Naive thymus-derived CD4-positive, alpha-beta T cell (primary cell): ENCODE measurements at regions of chr5 and their contacts with region 1.

Region 1: GRCh38 chr5:55982957-55983381 is 11.8 kb downstream of the IL6ST start:
- DNase-seq: peak in 7 of 9 donors; percentile 42 to 63 (median 53)
- ATAC-seq: peak; percentile 46
- H3K4me3 ChIP-seq: peak overlapping the region; percentile 44
- H3K4me3 Mint-ChIP-seq: peak overlapping the region; percentile 48 to 96 (median 84)
- H3K27ac ChIP-seq: peak overlapping the region; percentile 67
- H3K27ac Mint-ChIP-seq: peak overlapping the region; percentile 24 to 98 (median 85)
- H3K4me1 ChIP-seq: peaks cover 0 to 63% of the 10 kb centered on the region in 2 donors
- H3K4me1 Mint-ChIP-seq: peaks cover 37 to 94% (median 84%) of the 10 kb centered on the region in 7 donors
- H3K27me3 ChIP-seq: no peaks in the 10 kb centered on the region
- H3K27me3 Mint-ChIP-seq: no peaks in the 10 kb centered on the region

Region 2: GRCh38 chr5:55633574-55634208 is 349.3 kb before region 1 on chr5:
- CTCF ChIA-PET with region 1: no interaction called
- POLR2A ChIA-PET with region 1: no interaction called
- intact Hi-C with region 1: no loop called
- DNase-seq: peak in 1 of 9 donors; percentile 3
- ATAC-seq: no peak
- H3K4me3 ChIP-seq: no peak overlapping the region
- H3K4me3 Mint-ChIP-seq: peak overlapping the region in 8 of 10 donors; percentile 32 to 68 (median 55)
- H3K27ac ChIP-seq: no peak overlapping the region
- H3K27ac Mint-ChIP-seq: peak overlapping the region in 8 of 9 donors; percentile 16 to 81 (median 43)
- H3K4me1 ChIP-seq: no peaks in the 10 kb centered on the region
- H3K4me1 Mint-ChIP-seq: peaks cover 0 to 18% (median 12%) of the 10 kb centered on the region in 7 donors
- H3K27me3 ChIP-seq: no peaks in the 10 kb centered on the region
- H3K27me3 Mint-ChIP-seq: no peaks in the 10 kb centered on the region

Region 3: DNA sequence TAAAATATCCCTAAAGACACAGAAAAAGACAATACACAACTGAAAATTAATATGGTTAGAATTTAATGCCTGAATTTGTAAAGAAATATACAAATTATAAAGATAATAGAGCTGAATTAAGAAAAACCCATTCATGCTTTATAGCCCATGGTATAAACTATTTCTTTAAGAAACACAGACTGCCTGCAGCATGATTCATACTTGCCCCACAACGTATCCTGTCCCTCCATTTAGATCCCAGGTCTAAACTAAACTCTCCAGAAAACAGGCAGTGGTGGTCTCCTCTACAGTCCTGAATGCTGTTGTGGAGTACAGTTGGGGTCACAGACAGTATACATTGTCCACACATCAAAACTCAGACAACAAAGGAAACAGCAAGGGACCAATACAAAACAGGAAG is 13.0 kb before region 1 on chr5:
- CTCF ChIA-PET with region 1: interaction called, 3 read pairs
- POLR2A ChIA-PET with region 1: interaction called, 5 read pairs
- intact Hi-C with region 1: loop called in 1 of 2 experiments (anchors 1 kb)
- DNase-seq: no peak
- ATAC-seq: peak; percentile 23
- H3K4me3 ChIP-seq: no peak overlapping the region
- H3K4me3 Mint-ChIP-seq: peak overlapping the region; percentile 25 to 81 (median 59)
- H3K27ac ChIP-seq: peak overlapping the region; percentile 2
- H3K27ac Mint-ChIP-seq: peak overlapping the region; percentile 29 to 94 (median 79)
- H3K4me1 ChIP-seq: peaks cover 0 to 41% of the 10 kb centered on the region in 2 donors
- H3K4me1 Mint-ChIP-seq: peaks cover 34 to 90% (median 68%) of the 10 kb centered on the region in 7 donors
- H3K27me3 ChIP-seq: no peaks in the 10 kb centered on the region
- H3K27me3 Mint-ChIP-seq: no peaks in the 10 kb centered on the region

Region 4: GRCh38 chr5:56056875-56057274 is 73.9 kb after region 1 on chr5:
- CTCF ChIA-PET with region 1: interaction called, 9 read pairs
- POLR2A ChIA-PET with region 1: interaction called, 97 read pairs
- intact Hi-C with region 1: loop called in 1 of 2 experiments (anchors 1 kb)
- DNase-seq: no peak
- ATAC-seq: no peak
- H3K4me3 ChIP-seq: peak overlapping the region; percentile 21
- H3K4me3 Mint-ChIP-seq: peak overlapping the region in 8 of 10 donors; percentile 55 to 83 (median 68)
- H3K27ac ChIP-seq: peak overlapping the region; percentile 60
- H3K27ac Mint-ChIP-seq: peak overlapping the region; percentile 44 to 99 (median 90)
- H3K4me1 ChIP-seq: peaks cover 8 to 96% of the 10 kb centered on the region in 2 donors
- H3K4me1 Mint-ChIP-seq: peaks cover 52 to 94% (median 76%) of the 10 kb centered on the region in 7 donors
- H3K27me3 ChIP-seq: no peaks in the 10 kb centered on the region
- H3K27me3 Mint-ChIP-seq: peaks cover 0 to 6% (median 0%) of the 10 kb centered on the region in 5 donors

Region 5: GRCh38 chr5:56095579-56096102 is 112.7 kb after region 1 on chr5:
- CTCF ChIA-PET with region 1: interaction called, 6 read pairs
- POLR2A ChIA-PET with region 1: interaction called, 5 read pairs
- intact Hi-C with region 1: loop called in 1 of 2 experiments (anchors 2 kb)
- DNase-seq: no peak
- ATAC-seq: no peak
- H3K4me3 ChIP-seq: no peak overlapping the region
- H3K4me3 Mint-ChIP-seq: peak overlapping the region in 9 of 10 donors; percentile 32 to 77 (median 56)
- H3K27ac ChIP-seq: peak overlapping the region; percentile 54
- H3K27ac Mint-ChIP-seq: peak overlapping the region; percentile 66 to 100 (median 91)
- H3K4me1 ChIP-seq: peaks cover 0 to 94% of the 10 kb centered on the region in 2 donors
- H3K4me1 Mint-ChIP-seq: peaks cover 56 to 97% (median 86%) of the 10 kb centered on the region in 7 donors
- H3K27me3 ChIP-seq: no peaks in the 10 kb centered on the region
- H3K27me3 Mint-ChIP-seq: no peaks in the 10 kb centered on the region

Region 6: DNA sequence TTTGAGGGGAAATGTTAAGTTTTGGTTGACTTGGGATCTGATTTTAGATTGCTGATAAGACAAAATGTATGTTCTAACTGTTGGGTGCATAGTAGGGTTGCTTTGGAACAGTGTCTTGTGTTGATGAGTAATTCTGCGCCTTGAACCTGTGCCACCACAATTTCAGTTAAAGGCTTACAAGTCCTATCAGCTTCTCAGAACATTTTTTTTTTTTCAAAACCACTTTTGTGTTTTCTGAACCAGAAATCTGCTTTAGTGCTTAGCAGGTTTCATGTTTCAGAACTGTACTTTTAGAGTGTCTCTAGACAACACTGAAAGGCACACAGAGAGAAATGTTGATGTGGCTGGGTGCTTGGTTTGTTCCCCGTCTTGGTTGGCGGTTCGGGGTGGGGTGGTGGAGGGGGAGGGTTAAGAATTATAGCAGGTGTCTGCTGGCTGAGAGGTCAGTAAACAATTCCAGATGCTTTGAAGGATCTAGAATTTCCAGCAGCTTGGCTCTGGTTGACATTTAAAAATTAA is 165.5 kb after region 1 on chr5:
- CTCF ChIA-PET with region 1: interaction called, 11 read pairs
- POLR2A ChIA-PET with region 1: interaction called, 4 read pairs
- intact Hi-C with region 1: loop called (anchors 1 to 2 kb)
- DNase-seq: peak in 8 of 9 donors; percentile 52 to 84 (median 70)
- ATAC-seq: peak; percentile 87
- H3K4me3 ChIP-seq: peak overlapping the region; percentile 18
- H3K4me3 Mint-ChIP-seq: peak overlapping the region; percentile 45 to 74 (median 62)
- H3K27ac ChIP-seq: peak overlapping the region; percentile 61
- H3K27ac Mint-ChIP-seq: peak overlapping the region; percentile 87 to 97 (median 94)
- H3K4me1 ChIP-seq: peaks cover 0 to 76% of the 10 kb centered on the region in 2 donors
- H3K4me1 Mint-ChIP-seq: peaks cover 39 to 76% (median 70%) of the 10 kb centered on the region in 7 donors
- H3K27me3 ChIP-seq: no peaks in the 10 kb centered on the region
- H3K27me3 Mint-ChIP-seq: peaks cover 0 to 2% (median 0%) of the 10 kb centered on the region in 5 donors

Region 7: DNA sequence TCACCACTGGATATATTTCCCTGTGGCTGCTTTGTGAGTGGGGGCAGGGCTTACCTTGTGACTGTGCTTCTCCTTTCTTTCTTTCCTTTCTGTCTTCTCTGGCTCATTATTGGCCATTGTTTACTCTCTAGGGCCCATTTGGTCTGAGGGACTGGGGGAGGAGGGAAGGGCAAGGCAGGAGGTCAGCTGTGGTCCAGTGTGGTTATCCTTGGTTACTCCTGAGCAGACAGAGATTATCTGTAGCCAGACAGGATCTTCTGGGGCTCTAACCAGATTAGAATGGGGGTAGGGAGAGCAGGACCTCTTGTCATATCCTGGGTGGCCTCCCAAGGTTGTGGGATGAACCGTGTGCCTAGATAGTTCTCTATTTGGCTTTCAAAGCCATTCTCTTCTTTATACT is 179.0 kb after region 1 on chr5:
- CTCF ChIA-PET with region 1: interaction called, 10 read pairs
- POLR2A ChIA-PET with region 1: interaction called, 6 read pairs
- intact Hi-C with region 1: loop called in 1 of 2 experiments (anchors 1 kb)
- DNase-seq: no peak
- ATAC-seq: no peak
- H3K4me3 ChIP-seq: no peak overlapping the region
- H3K4me3 Mint-ChIP-seq: peak overlapping the region in 5 of 10 donors; percentile 38 to 96 (median 93)
- H3K27ac ChIP-seq: peak overlapping the region; percentile 61
- H3K27ac Mint-ChIP-seq: peak overlapping the region; percentile 24 to 98 (median 95)
- H3K4me1 ChIP-seq: peaks cover 0 to 45% of the 10 kb centered on the region in 2 donors
- H3K4me1 Mint-ChIP-seq: peaks cover 42 to 93% (median 79%) of the 10 kb centered on the region in 7 donors
- H3K27me3 ChIP-seq: peaks cover 0 to 2% of the 10 kb centered on the region in 2 donors
- H3K27me3 Mint-ChIP-seq: peaks cover 0 to 2% (median 0%) of the 10 kb centered on the region in 5 donors

Region 8: GRCh38 chr5:56552612-56553268 is 569.8 kb after region 1 on chr5:
- CTCF ChIA-PET with region 1: no interaction called
- POLR2A ChIA-PET with region 1: no interaction called
- intact Hi-C with region 1: no loop called
- DNase-seq: no peak
- ATAC-seq: no peak
- H3K4me3 ChIP-seq: no peak overlapping the region
- H3K4me3 Mint-ChIP-seq: no peak overlapping the region
- H3K27ac ChIP-seq: no peak overlapping the region
- H3K27ac Mint-ChIP-seq: no peak overlapping the region
- H3K4me1 ChIP-seq: no peaks in the 10 kb centered on the region
- H3K4me1 Mint-ChIP-seq: peaks cover 0 to 9% (median 4%) of the 10 kb centered on the region in 7 donors
- H3K27me3 ChIP-seq: no peaks in the 10 kb centered on the region
- H3K27me3 Mint-ChIP-seq: peaks cover 0 to 8% (median 0%) of the 10 kb centered on the region in 5 donors